Activated CD4-positive, alpha-beta T cell treated with anti-CD3 and anti-CD28 coated beads for 36 hours (primary cell): ENCODE measurements at regions of chr7 and their contacts with region 1.

Region 1: DNA sequence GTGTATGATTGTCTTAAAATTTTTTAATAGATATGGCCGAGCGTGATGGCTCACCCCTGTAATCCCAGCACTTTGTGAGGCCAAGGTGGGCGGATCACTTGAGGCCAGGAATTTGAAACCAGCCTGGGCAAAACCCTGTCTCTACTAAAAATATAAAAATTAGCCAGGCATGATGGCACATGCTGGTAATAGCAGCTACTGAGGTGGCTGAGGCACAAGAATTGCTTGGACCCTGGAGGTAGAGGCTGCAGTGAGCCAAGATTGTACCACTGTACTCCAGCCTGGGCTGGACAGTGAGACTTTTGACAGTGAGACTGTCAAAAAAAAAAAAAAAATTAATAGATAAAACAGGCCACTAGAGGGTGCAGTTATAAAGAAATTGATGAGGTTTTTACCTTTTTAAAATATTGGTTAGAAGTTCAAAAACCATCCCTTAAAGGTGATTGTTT is 20.5 kb downstream of the NOM1 start:
- DNase-seq: no peak
- ATAC-seq: peak; percentile 36
- H3K4me3 Mint-ChIP-seq: no peak overlapping the region
- H3K27ac Mint-ChIP-seq: no peak overlapping the region
- H3K4me1 Mint-ChIP-seq: no peaks in the 10 kb centered on the region
- H3K27me3 Mint-ChIP-seq: no peaks in the 10 kb centered on the region

Region 2: GRCh38 chr7:157010588-157011332 is 40.8 kb after region 1 on chr7 and contains the start of gene MNX1:
- CTCF ChIA-PET with region 1: no interaction called
- POLR2A ChIA-PET with region 1: no interaction called
- intact Hi-C with region 1: no loop called
- DNase-seq: peak; percentile 73
- ATAC-seq: peak; percentile 83
- H3K4me3 Mint-ChIP-seq: peak within 1 kb of the TSS; percentile 39
- H3K27ac Mint-ChIP-seq: no peak within 1 kb of the TSS
- H3K4me1 Mint-ChIP-seq: peaks cover 15% of the 10 kb centered on the region
- H3K27me3 Mint-ChIP-seq: peaks cover 69% of the 10 kb centered on the region
- total RNA-seq, gene MNX1: not detected

Region 3: DNA sequence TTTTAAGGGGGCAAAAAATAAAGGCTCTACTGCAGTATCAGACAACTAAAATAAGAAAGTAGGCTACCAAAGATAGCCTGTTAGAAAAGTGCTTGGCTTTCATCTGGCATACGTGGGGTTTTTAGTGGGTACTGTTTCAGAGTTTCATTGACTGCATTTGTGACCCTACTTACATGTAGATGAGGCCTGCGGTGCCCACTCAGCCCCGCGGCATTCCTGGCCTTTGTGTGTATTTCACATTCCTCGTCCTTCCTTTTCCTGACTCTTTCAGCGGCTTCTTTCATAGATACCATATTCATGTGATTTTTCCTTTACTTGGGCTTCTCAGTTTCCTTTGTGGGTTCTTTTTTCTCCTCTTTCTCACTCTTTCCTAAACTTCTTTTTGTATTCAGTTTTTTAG is 219.4 kb after region 1 on chr7:
- CTCF ChIA-PET with region 1: interaction called, 3 read pairs
- POLR2A ChIA-PET with region 1: no interaction called
- intact Hi-C with region 1: loop called in 1 of 2 experiments (anchors 5 kb)
- DNase-seq: no peak
- ATAC-seq: no peak
- H3K4me3 Mint-ChIP-seq: no peak overlapping the region
- H3K27ac Mint-ChIP-seq: no peak overlapping the region
- H3K4me1 Mint-ChIP-seq: no peaks in the 10 kb centered on the region
- H3K27me3 Mint-ChIP-seq: no peaks in the 10 kb centered on the region

Region 4: GRCh38 chr7:157250605-157251228 is 280.7 kb after region 1 on chr7:
- CTCF ChIA-PET with region 1: no interaction called
- POLR2A ChIA-PET with region 1: no interaction called
- intact Hi-C with region 1: loop called in 1 of 2 experiments (anchors 1 kb)
- DNase-seq: peak; percentile 62
- ATAC-seq: peak; percentile 83
- H3K4me3 Mint-ChIP-seq: no peak overlapping the region
- H3K27ac Mint-ChIP-seq: no peak overlapping the region
- H3K4me1 Mint-ChIP-seq: no peaks in the 10 kb centered on the region
- H3K27me3 Mint-ChIP-seq: no peaks in the 10 kb centered on the region

Region 5: GRCh38 chr7:157273208-157274093 is 303.5 kb after region 1 on chr7:
- CTCF ChIA-PET with region 1: interaction called, 3 read pairs
- POLR2A ChIA-PET with region 1: no interaction called
- intact Hi-C with region 1: loop called in 1 of 2 experiments (anchors 1 kb)
- DNase-seq: peak; percentile 81
- ATAC-seq: peak; percentile 84
- H3K4me3 Mint-ChIP-seq: no peak overlapping the region
- H3K27ac Mint-ChIP-seq: no peak overlapping the region
- H3K4me1 Mint-ChIP-seq: peaks cover 18% of the 10 kb centered on the region
- H3K27me3 Mint-ChIP-seq: peaks cover 2% of the 10 kb centered on the region